Activated CD8-positive, alpha-beta T cell treated with anti-CD3 and anti-CD28 coated beads, Interleukin-2, amount 10 ng/mL, durations not matched to agents 7 days and 5 days (primary cell): ENCODE measurements at regions of chr14 and their contacts with region 1.

Region 1: DNA sequence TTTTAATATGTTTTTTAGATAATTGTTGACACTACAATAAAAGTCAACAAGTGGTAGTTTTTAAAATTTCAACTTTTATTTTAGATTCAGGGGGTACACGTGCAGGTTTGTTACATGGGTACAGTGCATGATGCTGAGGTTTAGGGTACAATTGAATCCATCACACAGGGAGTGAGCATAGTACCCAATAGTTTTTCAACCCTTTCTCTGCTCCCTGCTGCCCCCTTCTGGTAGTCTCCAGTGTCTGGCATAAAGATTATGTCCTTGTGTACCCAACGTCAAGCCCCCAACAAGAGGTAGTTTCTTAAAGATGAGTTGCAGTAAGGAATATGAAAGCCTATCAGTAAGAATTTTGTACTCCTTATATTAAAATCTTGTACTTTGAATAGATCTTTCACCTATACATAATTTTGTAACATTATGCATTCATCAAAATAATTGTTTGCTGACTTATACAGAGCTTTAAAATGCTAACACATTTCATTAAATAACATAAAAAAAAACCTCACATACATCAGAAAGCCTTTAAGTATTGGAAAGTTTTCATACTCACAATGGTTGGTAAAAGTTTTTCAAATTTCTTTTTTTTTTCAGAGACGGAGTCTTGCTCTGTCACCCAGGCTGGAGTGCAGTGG is 5.4 kb upstream of the RALGAPA1 start:
- DNase-seq: peak; percentile 88
- ATAC-seq: peak; percentile 91
- H3K4me3 Mint-ChIP-seq: no peak overlapping the region
- H3K27ac Mint-ChIP-seq: no peak overlapping the region
- H3K4me1 Mint-ChIP-seq: peaks cover 4% of the 10 kb centered on the region
- H3K27me3 Mint-ChIP-seq: peaks cover 2% of the 10 kb centered on the region

Region 2: DNA sequence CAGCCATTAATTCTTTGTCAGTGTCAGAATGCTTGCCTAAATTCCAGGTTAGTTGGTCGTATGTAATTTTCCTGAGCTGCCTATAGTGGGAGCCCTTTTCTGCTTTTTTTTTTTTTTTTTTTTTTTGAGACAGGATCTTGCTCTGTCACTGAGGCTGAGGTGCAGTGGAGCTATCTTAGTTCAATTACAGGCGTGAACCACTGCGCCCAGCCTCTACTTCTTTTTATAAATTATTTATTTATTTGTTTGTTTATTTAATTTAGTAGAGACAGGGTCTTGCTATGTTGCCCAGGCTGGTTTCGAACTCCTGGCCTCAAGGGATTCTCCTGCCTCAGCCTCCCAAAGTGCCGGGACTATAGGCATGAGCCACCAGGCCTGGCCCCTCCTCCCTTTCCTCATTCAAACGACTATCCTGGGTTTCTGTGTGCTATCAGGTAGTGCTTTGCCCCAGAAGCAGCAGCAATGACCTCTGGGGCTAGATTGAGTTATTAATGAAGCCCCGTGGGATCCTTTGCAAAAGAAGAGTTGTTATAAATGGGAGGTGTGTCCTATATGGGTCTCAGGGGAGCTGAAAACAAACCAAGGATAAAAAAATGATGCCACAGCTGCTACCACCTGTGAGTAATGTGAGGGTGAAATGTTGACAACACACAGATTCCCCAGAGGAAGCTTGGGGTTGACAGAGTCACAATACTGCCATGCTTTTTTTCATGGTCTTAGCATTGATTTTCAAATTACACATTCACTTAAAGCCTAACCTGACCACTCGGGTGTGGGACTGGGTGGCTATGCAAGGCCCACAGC is 375.4 kb before region 1 on chr14:
- CTCF ChIA-PET with region 1: interaction called, 17 read pairs
- POLR2A ChIA-PET with region 1: interaction called, 3 read pairs
- DNase-seq: no peak
- ATAC-seq: peak; percentile 57
- H3K4me3 Mint-ChIP-seq: no peak overlapping the region
- H3K27ac Mint-ChIP-seq: no peak overlapping the region
- H3K4me1 Mint-ChIP-seq: peaks cover 5% of the 10 kb centered on the region
- H3K27me3 Mint-ChIP-seq: no peaks in the 10 kb centered on the region

Region 3: DNA sequence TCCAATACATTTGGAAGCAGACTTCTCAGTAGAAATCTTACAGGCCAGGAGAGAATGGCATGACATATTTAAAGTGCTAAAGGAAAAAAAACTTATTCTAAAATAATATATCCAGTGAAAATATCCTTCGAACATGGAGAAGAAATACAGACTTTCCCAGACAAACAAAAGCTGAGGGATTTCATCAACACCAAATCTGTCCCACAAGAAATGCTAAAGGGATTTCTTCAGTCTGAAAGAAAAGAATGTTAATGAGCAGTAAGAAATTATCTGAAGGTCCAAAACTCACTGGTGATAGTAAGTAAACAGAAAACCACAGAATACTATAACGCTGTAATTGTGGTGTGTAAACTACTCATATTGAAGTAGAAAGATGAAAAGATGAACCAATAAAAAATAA is 176.6 kb before region 1 on chr14:
- CTCF ChIA-PET with region 1: no interaction called
- POLR2A ChIA-PET with region 1: no interaction called
- DNase-seq: no peak
- ATAC-seq: no peak
- H3K4me3 Mint-ChIP-seq: no peak overlapping the region
- H3K27ac Mint-ChIP-seq: no peak overlapping the region
- H3K4me1 Mint-ChIP-seq: no peaks in the 10 kb centered on the region
- H3K27me3 Mint-ChIP-seq: no peaks in the 10 kb centered on the region

Region 4: GRCh38 chr14:35687335-35687939 is 127.1 kb before region 1 on chr14:
- CTCF ChIA-PET with region 1: interaction called, 18 read pairs
- POLR2A ChIA-PET with region 1: no interaction called
- DNase-seq: peak; percentile 56
- ATAC-seq: peak; percentile 68
- H3K4me3 Mint-ChIP-seq: no peak overlapping the region
- H3K27ac Mint-ChIP-seq: no peak overlapping the region
- H3K4me1 Mint-ChIP-seq: peaks cover 12% of the 10 kb centered on the region
- H3K27me3 Mint-ChIP-seq: no peaks in the 10 kb centered on the region

Region 5: DNA sequence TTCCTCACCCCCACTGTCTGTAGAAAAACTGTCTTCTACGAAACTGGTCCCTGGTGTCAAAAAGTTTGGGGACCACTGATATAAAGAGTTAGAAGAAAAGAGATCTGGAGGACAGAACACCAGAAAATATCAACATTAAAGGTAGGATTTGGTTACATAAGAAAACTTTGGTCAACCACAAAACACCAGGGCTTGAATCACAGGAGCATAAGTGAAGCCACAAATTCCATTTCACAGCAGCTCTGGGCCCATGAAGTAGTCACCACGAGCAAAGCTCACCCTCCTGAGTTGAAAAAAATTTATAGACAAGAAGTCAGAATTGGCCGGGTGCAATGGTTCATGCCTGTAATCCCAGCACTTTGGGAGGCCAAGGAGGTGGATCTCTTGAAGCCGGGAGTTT is 24.8 kb before region 1 on chr14:
- CTCF ChIA-PET with region 1: no interaction called
- POLR2A ChIA-PET with region 1: no interaction called
- DNase-seq: peak; percentile 33
- ATAC-seq: peak; percentile 72
- H3K4me3 Mint-ChIP-seq: no peak overlapping the region
- H3K27ac Mint-ChIP-seq: peak overlapping the region; percentile 5
- H3K4me1 Mint-ChIP-seq: peaks cover 14% of the 10 kb centered on the region
- H3K27me3 Mint-ChIP-seq: no peaks in the 10 kb centered on the region

Region 6: GRCh38 chr14:35826218-35826951 is 11.9 kb after region 1 on chr14 and contains the start of gene BRMS1L:
- CTCF ChIA-PET with region 1: interaction called, 12 read pairs
- POLR2A ChIA-PET with region 1: interaction called, 4 read pairs
- DNase-seq: peak; percentile 98
- ATAC-seq: peak; percentile 98
- H3K4me3 Mint-ChIP-seq: peak within 1 kb of the TSS; percentile 77
- H3K27ac Mint-ChIP-seq: peak within 1 kb of the TSS; percentile 73
- H3K4me1 Mint-ChIP-seq: peaks cover 26% of the 10 kb centered on the region
- H3K27me3 Mint-ChIP-seq: no peaks in the 10 kb centered on the region
- total RNA-seq, gene BRMS1L: 5.1 to 5.5 TPM